Naive thymus-derived CD4-positive, alpha-beta T cell (primary cell): ENCODE measurements at regions of chr17 and their contacts with region 1.

Region 1: DNA sequence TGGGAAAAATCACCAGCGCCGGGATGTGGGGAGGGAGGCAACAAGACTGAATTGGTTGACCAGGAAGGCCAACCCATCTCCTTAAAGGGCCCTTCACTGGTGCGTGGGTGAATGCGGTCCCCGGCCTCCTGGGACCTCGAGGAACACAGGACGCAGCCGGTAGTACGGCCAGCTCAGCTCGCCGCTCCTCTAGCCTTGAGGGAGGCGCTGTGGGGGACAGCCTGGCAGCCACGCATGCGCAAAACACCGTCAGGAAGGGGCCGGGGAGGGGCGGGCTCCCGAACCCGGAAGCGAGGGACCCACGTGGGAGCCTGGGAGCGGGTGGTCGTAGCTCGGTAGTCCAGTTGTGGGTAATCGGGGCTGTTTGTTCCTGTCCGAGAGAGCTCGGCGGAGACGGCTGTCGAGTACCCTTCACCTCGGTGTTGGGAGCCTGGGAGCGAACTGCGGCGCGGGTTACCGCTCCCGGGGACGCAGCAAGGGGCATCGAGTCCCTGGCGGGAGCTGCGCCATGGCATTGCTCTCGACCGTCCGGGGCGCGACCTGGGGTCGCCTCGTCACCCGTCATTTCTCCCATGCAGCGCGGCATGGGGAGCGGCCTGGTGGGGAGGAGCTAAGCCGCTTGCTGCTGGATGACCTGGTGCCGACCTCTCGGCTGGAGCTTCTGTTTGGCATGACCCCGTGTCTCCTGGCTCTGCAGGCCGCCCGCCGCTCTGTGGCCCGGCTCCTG is at the start of gene MRM1:
- DNase-seq: peak; percentile 72 to 89 (median 80)
- ATAC-seq: peak; percentile 90
- H3K4me3 ChIP-seq: peak within 1 kb of the TSS; percentile 95
- H3K4me3 Mint-ChIP-seq: peak within 1 kb of the TSS; percentile 92 to 97 (median 94)
- H3K27ac ChIP-seq: peak within 1 kb of the TSS; percentile 79
- H3K27ac Mint-ChIP-seq: peak within 1 kb of the TSS; percentile 91 to 96 (median 94)
- H3K4me1 ChIP-seq: peaks cover 11 to 19% of the 10 kb centered on the region in 2 donors
- H3K4me1 Mint-ChIP-seq: peaks cover 23 to 49% (median 41%) of the 10 kb centered on the region in 7 donors
- H3K27me3 ChIP-seq: no peaks in the 10 kb centered on the region
- H3K27me3 Mint-ChIP-seq: no peaks in the 10 kb centered on the region
- total RNA-seq, gene MRM1: 3.8 to 15.6 (median 13.3) TPM

Region 2: GRCh38 chr17:35700150-35700549 is 901.3 kb before region 1 on chr17:
- CTCF ChIA-PET with region 1: no interaction called
- POLR2A ChIA-PET with region 1: no interaction called
- intact Hi-C with region 1: no loop called
- DNase-seq: no peak
- ATAC-seq: no peak
- H3K4me3 ChIP-seq: no peak overlapping the region
- H3K4me3 Mint-ChIP-seq: no peak overlapping the region
- H3K27ac ChIP-seq: no peak overlapping the region
- H3K27ac Mint-ChIP-seq: no peak overlapping the region
- H3K4me1 ChIP-seq: no peaks in the 10 kb centered on the region
- H3K4me1 Mint-ChIP-seq: peaks cover 8 to 29% (median 21%) of the 10 kb centered on the region in 7 donors
- H3K27me3 ChIP-seq: no peaks in the 10 kb centered on the region
- H3K27me3 Mint-ChIP-seq: no peaks in the 10 kb centered on the region

Region 3: DNA sequence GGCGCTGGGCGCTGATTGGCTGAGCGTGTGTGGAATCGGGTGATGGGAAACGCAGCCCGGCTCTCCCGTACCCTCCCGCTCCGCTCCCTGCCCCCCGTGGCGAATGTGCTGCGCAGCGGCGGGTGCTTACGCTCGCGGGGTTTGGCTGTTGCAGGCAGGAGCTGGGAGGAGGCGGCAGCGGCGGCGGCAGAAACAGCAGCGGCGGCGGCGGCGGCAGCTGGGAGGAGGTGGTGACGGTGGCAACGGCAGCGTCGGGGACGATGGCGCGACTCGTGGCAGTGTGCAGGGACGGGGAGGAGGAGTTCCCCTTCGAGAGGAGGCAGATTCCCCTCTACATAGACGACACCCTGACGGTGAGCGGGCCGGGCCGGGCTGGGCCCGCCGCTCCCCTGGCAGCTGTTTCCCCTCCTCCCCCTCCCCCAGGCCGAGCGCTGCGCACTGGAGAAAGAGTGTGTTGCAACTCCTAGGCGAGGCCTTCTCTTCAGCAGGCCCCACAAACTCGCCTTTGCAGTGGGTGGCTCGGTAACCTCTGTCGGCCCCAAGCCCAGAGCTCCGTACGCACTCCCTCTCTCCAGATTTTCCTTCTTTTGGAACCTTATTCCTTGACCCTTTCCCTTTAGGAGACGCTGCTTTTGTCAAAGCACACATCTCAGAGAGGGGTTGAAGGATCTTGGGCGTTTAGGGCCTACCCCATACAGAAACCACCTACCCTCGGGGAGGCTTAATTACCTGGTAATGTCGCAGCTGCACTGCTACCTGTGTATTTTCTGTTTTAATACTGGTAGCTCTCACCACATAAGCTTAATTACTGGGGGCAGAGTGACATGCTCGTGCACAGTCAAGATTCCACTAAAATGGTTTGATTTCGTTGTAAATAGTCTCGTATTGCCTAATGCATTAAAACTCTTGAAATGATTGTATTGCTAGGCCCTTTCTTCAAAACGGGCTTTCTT is 55.7 kb before region 1 on chr17:
- CTCF ChIA-PET with region 1: interaction called, 5 read pairs
- POLR2A ChIA-PET with region 1: interaction called, 52 read pairs
- intact Hi-C with region 1: loop called (anchors 1 to 2 kb)
- DNase-seq: peak; percentile 95 to 98 (median 98)
- ATAC-seq: peak; percentile 87
- H3K4me3 ChIP-seq: peak overlapping the region; percentile 93
- H3K4me3 Mint-ChIP-seq: peak overlapping the region; percentile 87 to 97 (median 94)
- H3K27ac ChIP-seq: peak overlapping the region; percentile 94
- H3K27ac Mint-ChIP-seq: peak overlapping the region; percentile 90 to 96 (median 94)
- H3K4me1 ChIP-seq: peaks cover 40 to 44% of the 10 kb centered on the region in 2 donors
- H3K4me1 Mint-ChIP-seq: peaks cover 13 to 57% (median 44%) of the 10 kb centered on the region in 7 donors
- H3K27me3 ChIP-seq: no peaks in the 10 kb centered on the region
- H3K27me3 Mint-ChIP-seq: no peaks in the 10 kb centered on the region

Region 4: DNA sequence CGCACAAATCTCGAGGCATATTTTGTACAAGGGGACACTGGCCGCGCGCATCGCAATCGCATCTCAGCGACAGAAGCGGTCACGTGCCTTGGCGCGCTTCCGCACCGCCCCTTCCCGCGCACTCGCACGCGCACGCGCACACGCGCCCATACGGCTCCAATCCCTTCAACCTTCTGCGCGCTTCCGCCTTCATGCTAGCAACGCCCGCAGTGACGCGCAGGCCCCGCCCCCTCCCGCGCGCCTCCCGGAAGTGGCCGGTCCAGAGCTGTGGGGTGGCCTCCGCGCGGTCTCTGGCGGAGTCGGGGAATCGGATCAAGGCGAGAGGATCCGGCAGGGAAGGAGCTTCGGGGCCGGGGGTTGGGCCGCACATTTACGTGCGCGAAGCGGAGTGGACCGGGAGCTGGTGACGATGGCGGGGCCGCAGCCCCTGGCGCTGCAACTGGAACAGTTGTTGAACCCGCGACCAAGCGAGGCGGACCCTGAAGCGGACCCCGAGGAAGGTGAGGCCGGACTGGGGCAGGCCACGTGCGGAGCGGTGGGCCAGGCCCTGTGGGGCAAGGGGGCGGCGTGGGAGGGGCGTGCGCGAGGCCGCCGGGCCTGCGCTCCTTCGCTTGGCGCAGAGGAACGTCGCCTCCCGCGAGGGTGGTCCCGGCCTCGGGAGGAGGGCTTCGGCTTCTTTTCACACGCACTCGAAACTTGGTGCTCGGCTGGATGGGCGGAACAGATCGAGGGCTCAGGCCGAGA is 347.4 kb after region 1 on chr17 and contains the start of gene AATF:
- CTCF ChIA-PET with region 1: no interaction called
- POLR2A ChIA-PET with region 1: interaction called, 3 read pairs
- intact Hi-C with region 1: loop called in 1 of 2 experiments (anchors 5 kb)
- DNase-seq: peak; percentile 93 to 99 (median 97)
- ATAC-seq: peak; percentile 99
- H3K4me3 ChIP-seq: peak within 1 kb of the TSS; percentile 69
- H3K4me3 Mint-ChIP-seq: peak within 1 kb of the TSS; percentile 91 to 99 (median 95)
- H3K27ac ChIP-seq: peak within 1 kb of the TSS; percentile 85
- H3K27ac Mint-ChIP-seq: peak within 1 kb of the TSS; percentile 91 to 97 (median 94)
- H3K4me1 ChIP-seq: peaks cover 21 to 33% of the 10 kb centered on the region in 2 donors
- H3K4me1 Mint-ChIP-seq: peaks cover 43 to 60% (median 51%) of the 10 kb centered on the region in 7 donors
- H3K27me3 ChIP-seq: peaks cover 7 to 18% of the 10 kb centered on the region in 2 donors
- H3K27me3 Mint-ChIP-seq: peaks cover 26 to 45% (median 34%) of the 10 kb centered on the region in 5 donors
- total RNA-seq, gene AATF: 39.7 to 70.8 (median 58.7) TPM

Region 5: GRCh38 chr17:37358830-37359681 is 757.6 kb after region 1 on chr17:
- CTCF ChIA-PET with region 1: no interaction called
- POLR2A ChIA-PET with region 1: interaction called, 3 read pairs
- intact Hi-C with region 1: loop called in 1 of 2 experiments (anchors 1 kb)
- DNase-seq: peak; percentile 81 to 95 (median 85)
- ATAC-seq: peak; percentile 97
- H3K4me3 ChIP-seq: peak overlapping the region; percentile 80
- H3K4me3 Mint-ChIP-seq: peak overlapping the region; percentile 77 to 96 (median 91)
- H3K27ac ChIP-seq: peak overlapping the region; percentile 67
- H3K27ac Mint-ChIP-seq: peak overlapping the region in 7 of 9 donors; percentile 80 to 92 (median 87)
- H3K4me1 ChIP-seq: peaks cover 6 to 14% of the 10 kb centered on the region in 2 donors
- H3K4me1 Mint-ChIP-seq: peaks cover 11 to 28% (median 23%) of the 10 kb centered on the region in 7 donors
- H3K27me3 ChIP-seq: no peaks in the 10 kb centered on the region
- H3K27me3 Mint-ChIP-seq: no peaks in the 10 kb centered on the region

Region 6: DNA sequence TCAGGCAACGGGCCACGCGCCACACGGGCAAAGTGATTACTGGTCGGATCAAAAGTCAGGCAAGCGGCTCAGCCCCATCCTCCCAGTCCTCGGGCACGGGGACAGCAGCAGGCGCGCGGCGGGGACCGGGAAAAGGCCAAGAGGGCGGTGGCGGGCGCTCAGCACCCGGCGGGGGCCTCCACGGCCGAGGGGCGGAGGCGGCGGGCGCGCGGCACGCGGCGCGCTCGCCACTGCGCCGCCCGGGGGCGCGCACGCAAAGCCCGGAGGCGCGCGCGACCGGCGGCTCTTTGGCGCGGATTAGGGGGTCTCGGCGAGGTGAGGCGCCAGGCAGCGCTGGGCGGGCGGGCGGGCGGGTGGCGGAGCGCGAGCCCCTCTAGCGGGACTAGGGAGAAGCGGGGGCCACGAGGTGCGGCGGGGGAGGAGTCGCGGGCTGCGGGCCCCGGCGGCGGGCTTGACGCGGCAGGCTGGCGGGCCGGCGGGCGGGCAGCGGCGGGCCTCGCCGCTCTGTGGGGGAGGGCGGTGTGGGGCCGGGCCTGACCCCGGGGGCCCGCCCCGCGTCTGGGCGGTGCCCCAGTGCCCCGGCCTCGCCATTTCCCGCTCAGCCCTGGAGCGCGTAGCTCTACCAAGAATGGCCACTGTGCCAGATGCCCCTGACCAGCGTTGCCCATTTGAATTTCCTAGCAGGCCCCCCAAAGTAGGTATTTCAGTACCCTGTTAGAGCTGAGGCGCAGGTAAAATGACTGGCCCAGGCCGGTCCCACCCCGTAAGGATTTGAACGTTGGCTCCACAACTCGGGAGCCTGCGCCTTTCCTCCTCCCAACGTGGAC is 805.4 kb after region 1 on chr17 and contains the starts of genes ACACA and TADA2A:
- CTCF ChIA-PET with region 1: no interaction called
- POLR2A ChIA-PET with region 1: no interaction called
- intact Hi-C with region 1: loop called in 1 of 2 experiments (anchors 10 kb)
- DNase-seq: peak; percentile 52 to 86 (median 65)
- ATAC-seq: peak; percentile 95
- H3K4me3 ChIP-seq: peak within 1 kb of the TSS; percentile 99
- H3K4me3 Mint-ChIP-seq: peak within 1 kb of the TSS; percentile 94 to 98 (median 96)
- H3K27ac ChIP-seq: peak within 1 kb of the TSS; percentile 73
- H3K27ac Mint-ChIP-seq: peak within 1 kb of the TSS; percentile 84 to 98 (median 90)
- H3K4me1 ChIP-seq: peaks cover 5 to 11% of the 10 kb centered on the region in 2 donors
- H3K4me1 Mint-ChIP-seq: peaks cover 15 to 55% (median 46%) of the 10 kb centered on the region in 7 donors
- H3K27me3 ChIP-seq: no peaks in the 10 kb centered on the region
- H3K27me3 Mint-ChIP-seq: no peaks in the 10 kb centered on the region
- total RNA-seq, gene ACACA: 13.1 to 47.0 (median 24.0) TPM
- total RNA-seq, gene TADA2A: 15.2 to 41.3 (median 28.7) TPM